Dorsolateral prefrontal cortex (tissue), 120 donors: ENCODE measurements at regions of chr17 and their contacts with region 1.

Region 1: GRCh38 chr17:21445091-21445650 is 69.0 kb downstream of the KCNJ12 start:
- DNase-seq: no peak
- H3K4me3 ChIP-seq: no peak overlapping the region
- H3K27ac ChIP-seq: no peak overlapping the region
- H3K27me3 ChIP-seq: no peaks in the 10 kb centered on the region
- CTCF ChIP-seq: no peak

Region 2: GRCh38 chr17:21252796-21253645 is 192.2 kb before region 1 on chr17 and contains the start of gene NATD1:
- intact Hi-C with region 1: no loop called
- DNase-seq: peak; percentile 78 to 92 (median 87)
- H3K4me3 ChIP-seq: peak within 1 kb of the TSS; percentile 50 to 85 (median 67)
- H3K27ac ChIP-seq: peak within 1 kb of the TSS in 54 of 59 donors; percentile 9 to 92 (median 76)
- H3K27me3 ChIP-seq: no peaks in the 10 kb centered on the region
- CTCF ChIP-seq: peak in 20 of 56 donors; percentile 7 to 56 (median 27)
- total RNA-seq, gene NATD1: 5.2 to 13.5 (median 7.6) TPM

Region 3: GRCh38 chr17:21388066-21388465 is 57.1 kb before region 1 on chr17:
- intact Hi-C with region 1: loop called in 1 of 2 experiments (anchors 10 kb)
- DNase-seq: no peak
- H3K4me3 ChIP-seq: peak overlapping the region in 1 of 59 donors; percentile 11
- H3K27ac ChIP-seq: peak overlapping the region in 1 of 59 donors; percentile 55
- H3K27me3 ChIP-seq: peaks cover 0 to 11% (median 0%) of the 10 kb centered on the region in 45 donors
- CTCF ChIP-seq: no peak

Region 4: GRCh38 chr17:21505819-21506815 is 60.9 kb after region 1 on chr17:
- intact Hi-C with region 1: no loop called
- DNase-seq: no peak
- H3K4me3 ChIP-seq: no peak overlapping the region
- H3K27ac ChIP-seq: no peak overlapping the region
- H3K27me3 ChIP-seq: no peaks in the 10 kb centered on the region
- CTCF ChIP-seq: no peak